IMR-90 (cell line): ENCODE measurements at regions of chr3 and their contacts with region 1.

Region 1: DNA sequence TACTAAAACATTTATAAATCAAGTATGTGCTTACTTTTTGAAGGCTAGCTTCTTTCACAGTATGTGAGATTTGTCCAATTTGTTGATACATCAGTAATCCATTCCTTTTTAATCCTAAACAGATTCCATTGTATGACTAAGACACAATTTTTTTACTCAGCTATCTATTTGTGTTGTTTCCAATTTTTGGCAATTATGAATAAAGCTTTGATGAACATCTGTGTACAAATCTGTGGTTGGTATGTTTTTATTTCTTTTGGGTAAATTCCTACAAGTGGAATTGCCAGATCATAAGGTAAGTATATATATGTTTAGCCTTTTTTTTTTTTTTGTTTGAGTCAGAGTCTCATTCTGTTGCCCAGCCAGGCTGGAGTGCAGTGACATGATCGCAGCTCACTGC is 56.2 kb upstream of the VEPH1 start:
- DNase-seq: peak; percentile 42
- ATAC-seq: peak; percentile 17; the same call in 1 of the 2 replicates
- H3K4me3 ChIP-seq: no peak overlapping the region
- H3K27ac ChIP-seq: no peak overlapping the region
- H3K4me1 ChIP-seq: no peaks in the 10 kb centered on the region
- H3K27me3 ChIP-seq: no peaks in the 10 kb centered on the region
- CTCF ChIP-seq: no peak
- POLR2A ChIP-seq: no peak
- RAD21 ChIP-seq: no peak

Region 2: GRCh38 chr3:157810924-157811718 is 251.7 kb after region 1 on chr3:
- CTCF ChIA-PET with region 1: no interaction called
- POLR2A ChIA-PET with region 1: no interaction called
- dilution Hi-C with region 1: no loop called
- in situ Hi-C with region 1: no loop called
- intact Hi-C with region 1: loop called (anchors 1 kb)
- DNase-seq: no peak
- ATAC-seq: no peak
- H3K4me3 ChIP-seq: no peak overlapping the region
- H3K27ac ChIP-seq: no peak overlapping the region
- H3K4me1 ChIP-seq: peaks cover 2% of the 10 kb centered on the region; the same call in 1 of the 2 replicates
- H3K27me3 ChIP-seq: peaks cover 3% of the 10 kb centered on the region; the same call in 1 of the 2 replicates
- CTCF ChIP-seq: no peak
- POLR2A ChIP-seq: no peak
- RAD21 ChIP-seq: no peak